Pancreas (tissue), 10 donors: ENCODE measurements at regions of chr4 and their contacts with region 1.

Region 1: GRCh38 chr4:2977211-2978088 is 14.1 kb downstream of the GRK4 start:
- DNase-seq: no peak
- ATAC-seq: peak in 2 of 4 donors; percentile 45
- H3K4me3 ChIP-seq: no peak overlapping the region
- H3K27ac ChIP-seq: no peak overlapping the region
- H3K4me1 ChIP-seq: no peaks in the 10 kb centered on the region
- H3K27me3 ChIP-seq: no peaks in the 10 kb centered on the region
- CTCF ChIP-seq: no peak

Region 2: DNA sequence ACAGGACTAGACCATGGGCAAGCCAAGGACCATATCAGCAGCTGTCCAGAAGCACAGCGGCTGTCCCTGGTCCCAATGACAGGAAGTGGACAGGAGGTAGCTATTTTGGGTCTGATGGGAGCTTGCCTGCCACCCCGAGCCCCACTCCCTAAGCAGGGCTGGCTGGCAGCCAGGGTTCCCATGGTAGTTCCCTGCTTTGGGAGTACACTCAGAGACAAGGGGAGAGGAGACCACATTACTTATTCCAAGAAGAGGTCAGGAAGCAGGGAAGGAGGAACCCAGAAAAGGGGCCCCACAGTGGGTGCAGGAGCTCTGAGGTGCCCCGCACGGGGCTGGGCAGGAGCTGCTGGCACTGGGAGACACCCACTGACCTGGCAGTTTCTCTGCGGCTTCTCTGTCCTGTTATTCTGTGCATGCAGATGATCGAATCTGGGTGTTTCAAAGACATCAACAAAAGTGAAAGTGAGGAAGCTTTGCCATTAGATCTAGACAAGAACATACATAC is 60.6 kb after region 1 on chr4:
- intact Hi-C with region 1: loop called in 1 of 3 experiments (anchors 10 kb)
- DNase-seq: no peak
- ATAC-seq: no peak
- H3K4me3 ChIP-seq: no peak overlapping the region
- H3K27ac ChIP-seq: no peak overlapping the region
- H3K4me1 ChIP-seq: peaks cover 0 to 4% (median 0%) of the 10 kb centered on the region in 3 donors
- H3K27me3 ChIP-seq: no peaks in the 10 kb centered on the region
- CTCF ChIP-seq: no peak